Dendritic cell treated with granulocyte-macrophage colony-stimulating factor and Interleukin-4, amounts not matched to agents 40 ng/mL and 50 ng/mL, for 4 days (primary cell): ENCODE measurements at regions of chr17 and their contacts with region 1.

Region 1: DNA sequence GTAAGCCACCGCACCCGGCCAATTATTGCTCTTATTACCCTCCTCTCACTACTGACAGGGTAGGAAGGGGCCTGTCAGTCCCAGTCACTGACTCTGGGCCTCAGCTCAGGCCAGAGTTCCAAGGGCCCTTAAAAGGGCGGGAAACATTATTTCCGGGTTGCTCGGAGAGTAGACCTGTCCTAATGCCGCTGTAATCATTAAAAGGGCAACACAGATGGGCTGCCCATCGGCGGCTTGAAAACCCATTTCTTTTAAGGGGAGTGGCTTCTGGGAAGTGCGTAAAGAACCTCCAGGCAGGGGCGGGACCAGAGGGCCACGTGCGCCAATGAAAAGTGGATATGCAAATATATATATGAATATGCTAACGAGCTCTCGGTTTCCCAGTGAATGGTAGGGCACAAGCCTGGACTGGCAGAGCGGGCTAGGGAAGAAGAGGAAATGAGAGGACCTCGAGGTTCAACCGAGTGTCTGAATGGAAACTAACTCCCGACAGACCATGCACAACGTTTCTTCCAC is 26.6 kb downstream of the PIPOX start:
- H3K4me3 Mint-ChIP-seq: no peak overlapping the region
- H3K27ac Mint-ChIP-seq: peak overlapping the region; percentile 55
- H3K4me1 Mint-ChIP-seq: peaks cover 74% of the 10 kb centered on the region
- H3K27me3 Mint-ChIP-seq: no peaks in the 10 kb centered on the region

Region 2: DNA sequence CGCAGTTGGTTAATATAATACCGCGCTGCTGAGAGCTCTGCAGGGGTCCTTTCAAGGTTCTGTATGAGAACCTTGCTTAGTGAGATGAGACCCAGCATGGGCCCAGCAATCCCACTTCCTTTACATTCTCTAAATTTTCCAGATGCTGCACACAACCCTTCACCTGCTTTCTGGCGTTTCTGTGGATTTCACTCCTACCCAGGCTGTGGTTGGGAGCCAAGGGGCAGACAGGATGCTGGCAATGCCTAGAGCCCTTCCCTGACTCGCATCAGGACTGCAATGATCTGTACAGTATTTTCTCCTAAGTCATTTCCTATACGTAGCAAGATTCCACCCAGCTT is 36.8 kb before region 1 on chr17:
- intact Hi-C with region 1: loop called (anchors 5 kb)
- H3K4me3 Mint-ChIP-seq: no peak overlapping the region
- H3K27ac Mint-ChIP-seq: no peak overlapping the region
- H3K4me1 Mint-ChIP-seq: peaks cover 35% of the 10 kb centered on the region
- H3K27me3 Mint-ChIP-seq: peaks cover 42% of the 10 kb centered on the region

Region 3: GRCh38 chr17:29042679-29043538 is 26.7 kb before region 1 on chr17 and contains the start of gene PIPOX:
- intact Hi-C with region 1: no loop called
- H3K4me3 Mint-ChIP-seq: peak within 1 kb of the TSS; percentile 70
- H3K27ac Mint-ChIP-seq: peak within 1 kb of the TSS; percentile 95
- H3K4me1 Mint-ChIP-seq: peaks cover 68% of the 10 kb centered on the region
- H3K27me3 Mint-ChIP-seq: no peaks in the 10 kb centered on the region